ENCODE measurements at regions of chr5 and their contacts with region 1.

Region 1: GRCh38 chr5:133319905-133320520 is 268.2 kb downstream of the HSPA4 start:
- DNase-seq: peak; percentile 29
- H3K27ac ChIP-seq: no peak overlapping the region
- CTCF ChIP-seq: no peak

Region 2: GRCh38 chr5:133111299-133111698 is 208.7 kb before region 1 on chr5:
- CTCF ChIA-PET with region 1: interaction called, 10 read pairs
- POLR2A ChIA-PET with region 1: no interaction called
- DNase-seq: peak; percentile 87
- H3K27ac ChIP-seq: no peak overlapping the region; the same call in 1 of the 2 replicates
- CTCF ChIP-seq: peak; percentile 94